ENCODE measurements at regions of chr19 and their contacts with region 1.

Region 1: GRCh38 chr19:36489118-36489919 is at the start of gene ZNF566:
- DNase-seq: peak; percentile 95
- H3K4me3 Mint-ChIP-seq: peak within 1 kb of the TSS; percentile 96
- H3K27ac Mint-ChIP-seq: peak within 1 kb of the TSS; percentile 98
- H3K4me1 Mint-ChIP-seq: peaks cover 19% of the 10 kb centered on the region
- H3K27me3 Mint-ChIP-seq: no peaks in the 10 kb centered on the region
- total RNA-seq, gene ZNF566: 4.4 to 5.3 TPM

Region 2: GRCh38 chr19:36132489-36132891 is 356.8 kb before region 1 on chr19:
- CTCF ChIA-PET with region 1: no interaction called
- intact Hi-C with region 1: loop called (anchors 2 kb)
- DNase-seq: peak; percentile 61
- H3K4me3 Mint-ChIP-seq: no peak overlapping the region
- H3K27ac Mint-ChIP-seq: peak overlapping the region; percentile 18
- H3K4me1 Mint-ChIP-seq: peaks cover 32% of the 10 kb centered on the region
- H3K27me3 Mint-ChIP-seq: no peaks in the 10 kb centered on the region

Region 3: DNA sequence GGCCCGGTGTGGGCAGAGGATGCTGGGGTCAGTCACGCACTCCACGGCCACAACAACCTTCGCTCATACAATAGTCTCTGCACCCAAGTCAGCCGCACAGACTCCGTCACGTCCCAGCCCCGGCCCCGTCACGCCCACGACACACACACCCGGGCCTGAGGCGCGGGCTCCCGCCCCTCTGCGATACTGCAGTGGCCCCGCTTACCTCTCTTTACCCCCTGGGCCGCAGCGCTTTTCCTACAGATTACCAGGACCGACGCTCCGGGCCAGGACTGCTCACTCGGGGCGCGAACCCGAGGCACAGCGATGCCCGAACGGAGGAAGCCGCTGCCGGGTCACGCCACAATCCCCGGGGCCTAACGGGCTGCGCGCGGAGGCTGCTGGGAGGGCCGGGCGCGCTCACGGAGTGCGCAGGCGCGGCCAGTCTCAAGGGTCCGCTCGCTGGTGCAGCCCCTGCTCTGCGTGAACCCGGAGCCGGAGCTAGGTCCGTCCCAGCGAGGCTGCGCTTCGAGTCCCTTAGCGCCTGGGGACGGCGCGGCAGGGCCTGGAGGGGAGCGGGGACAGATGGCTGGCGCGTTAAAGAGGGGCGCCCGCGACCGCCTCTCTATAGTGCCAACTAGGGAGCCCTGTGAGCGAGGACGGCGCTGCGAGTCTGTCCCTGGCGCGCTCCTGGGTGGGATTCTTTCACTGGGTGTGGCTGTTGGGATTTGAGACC is 70.9 kb before region 1 on chr19 and contains the start of gene ZFP82:
- CTCF ChIA-PET with region 1: interaction called, 3 read pairs
- intact Hi-C with region 1: loop called (anchors 2 kb)
- DNase-seq: peak; percentile 81
- H3K4me3 Mint-ChIP-seq: peak within 1 kb of the TSS; percentile 92
- H3K27ac Mint-ChIP-seq: peak within 1 kb of the TSS; percentile 92
- H3K4me1 Mint-ChIP-seq: peaks cover 19% of the 10 kb centered on the region
- H3K27me3 Mint-ChIP-seq: peaks cover 18% of the 10 kb centered on the region
- total RNA-seq, gene ZFP82: 2.4 to 2.6 TPM

Region 4: GRCh38 chr19:36573020-36573885 is 83.9 kb after region 1 on chr19 and contains the start of gene ZNF529:
- CTCF ChIA-PET with region 1: interaction called, 5 read pairs
- intact Hi-C with region 1: loop called (anchors 5 kb)
- DNase-seq: peak; percentile 90
- H3K4me3 Mint-ChIP-seq: peak within 1 kb of the TSS; percentile 80
- H3K27ac Mint-ChIP-seq: peak within 1 kb of the TSS; percentile 85
- H3K4me1 Mint-ChIP-seq: peaks cover 20% of the 10 kb centered on the region
- H3K27me3 Mint-ChIP-seq: no peaks in the 10 kb centered on the region
- total RNA-seq, gene ZNF529: 17.1 to 18.3 TPM

Region 5: GRCh38 chr19:36687214-36688056 is 198.1 kb after region 1 on chr19 and contains the start of gene ZNF567:
- CTCF ChIA-PET with region 1: no interaction called
- intact Hi-C with region 1: loop called (anchors 1 kb)
- DNase-seq: peak; percentile 98
- H3K4me3 Mint-ChIP-seq: peak within 1 kb of the TSS; percentile 88
- H3K27ac Mint-ChIP-seq: peak within 1 kb of the TSS; percentile 90
- H3K4me1 Mint-ChIP-seq: peaks cover 26% of the 10 kb centered on the region
- H3K27me3 Mint-ChIP-seq: no peaks in the 10 kb centered on the region
- total RNA-seq, gene ZNF567: 6.0 to 6.8 TPM

Region 6: DNA sequence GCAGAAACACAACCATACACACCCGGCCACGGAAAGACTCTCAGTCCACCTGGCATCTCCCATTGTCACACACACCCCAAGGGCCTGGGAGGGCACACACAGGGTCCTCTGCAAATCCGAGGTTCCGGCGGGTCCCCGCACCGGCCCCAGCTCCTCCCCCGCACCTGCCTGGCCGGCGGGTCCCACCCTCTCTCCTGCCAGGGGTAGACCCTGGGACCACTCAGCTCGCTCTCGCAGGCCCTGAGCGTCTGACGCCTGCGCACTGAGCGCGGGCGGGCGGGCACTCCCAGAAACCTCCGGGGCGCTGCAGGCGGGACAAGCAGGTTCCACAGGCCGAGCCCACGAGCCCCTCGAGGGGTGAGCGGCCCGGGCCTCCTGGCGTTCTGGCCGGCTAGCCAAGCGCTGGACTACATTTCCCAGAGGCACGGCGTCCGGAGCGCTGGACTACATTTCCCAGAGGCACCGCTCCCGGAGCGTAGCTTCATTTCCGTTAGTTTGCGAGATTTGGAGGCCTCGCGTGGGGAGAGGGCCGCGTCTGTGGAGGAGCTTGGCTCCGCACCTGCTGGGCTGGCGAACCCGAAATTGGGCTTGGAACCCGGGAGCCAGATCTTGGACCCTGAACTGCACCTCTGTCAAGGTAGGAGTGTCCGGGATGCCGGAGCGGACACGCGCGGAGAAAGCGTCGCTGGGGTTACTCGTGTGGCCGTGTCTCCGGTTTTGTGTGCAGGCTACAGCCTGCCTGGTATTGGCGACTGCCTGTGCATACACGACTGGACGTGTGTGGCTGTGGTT is 588.8 kb after region 1 on chr19 and contains the start of gene ZNF420:
- CTCF ChIA-PET with region 1: no interaction called
- intact Hi-C with region 1: loop called (anchors 2 kb)
- DNase-seq: peak; percentile 92
- H3K4me3 Mint-ChIP-seq: peak within 1 kb of the TSS; percentile 93
- H3K27ac Mint-ChIP-seq: peak within 1 kb of the TSS; percentile 89
- H3K4me1 Mint-ChIP-seq: peaks cover 21% of the 10 kb centered on the region
- H3K27me3 Mint-ChIP-seq: no peaks in the 10 kb centered on the region
- total RNA-seq, gene ZNF420: 6.4 to 7.3 TPM

Measured in activated naive CD4-positive, alpha-beta T cell treated with anti-CD3 and anti-CD28 coated beads for 36 hours (primary cell).